Posterior vena cava (tissue), 2 donors: ENCODE measurements at regions of chr7 and their contacts with region 1.

Region 1: DNA sequence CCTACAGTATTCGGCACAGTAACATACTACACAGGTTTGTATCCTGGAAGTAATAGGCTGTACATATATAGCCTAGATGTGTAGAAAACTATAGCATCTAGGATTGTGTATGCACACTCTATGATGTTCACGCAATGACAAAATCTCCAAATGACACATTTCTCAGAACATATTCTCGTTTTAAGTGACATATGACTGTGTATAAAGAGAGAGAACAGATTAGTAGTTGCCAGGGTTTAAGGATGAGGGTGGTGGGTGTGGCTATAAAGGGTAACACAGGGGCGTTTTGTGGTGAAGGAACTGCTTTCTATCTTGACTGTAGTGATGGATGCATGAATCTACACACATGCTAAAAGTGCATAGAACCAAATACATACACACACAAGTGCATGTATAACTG is 101.2 kb downstream of the ARL4A start:
- DNase-seq: no peak

Region 2: GRCh38 chr7:11332186-11332864 is 1456.3 kb before region 1 on chr7:
- intact Hi-C with region 1: loop called in 1 of 2 experiments (anchors 5 kb)
- DNase-seq: no peak

Region 3: GRCh38 chr7:12706876-12707536 is 81.6 kb before region 1 on chr7:
- intact Hi-C with region 1: no loop called
- DNase-seq: no peak

Region 4: DNA sequence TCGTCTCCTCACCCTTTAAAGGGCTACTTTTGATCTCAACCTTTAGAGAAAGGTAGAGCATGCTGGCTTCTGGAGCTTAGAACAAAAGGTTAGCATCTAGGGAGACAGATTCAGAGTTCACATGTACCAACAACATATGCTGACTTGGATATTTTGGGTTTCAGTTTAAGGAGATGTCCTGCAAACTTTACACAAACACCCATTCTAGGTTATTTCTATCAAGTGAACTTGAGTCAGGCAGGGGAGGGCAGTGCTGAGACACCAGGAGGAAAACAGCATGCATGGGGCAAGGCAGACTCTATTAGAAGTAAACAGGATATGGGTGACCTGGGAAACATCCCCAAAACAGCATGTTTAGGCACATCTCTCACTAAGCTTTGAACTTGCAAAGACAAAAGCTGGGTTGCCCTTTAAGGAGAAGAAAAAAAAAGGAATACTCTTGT is 57.4 kb before region 1 on chr7:
- intact Hi-C with region 1: no loop called
- DNase-seq: no peak

Region 5: GRCh38 chr7:12839505-12840153 is 51.0 kb after region 1 on chr7:
- intact Hi-C with region 1: no loop called
- DNase-seq: peak; percentile 44